ENCODE measurements at regions of chr20 and their contacts with region 1.

Region 1: DNA sequence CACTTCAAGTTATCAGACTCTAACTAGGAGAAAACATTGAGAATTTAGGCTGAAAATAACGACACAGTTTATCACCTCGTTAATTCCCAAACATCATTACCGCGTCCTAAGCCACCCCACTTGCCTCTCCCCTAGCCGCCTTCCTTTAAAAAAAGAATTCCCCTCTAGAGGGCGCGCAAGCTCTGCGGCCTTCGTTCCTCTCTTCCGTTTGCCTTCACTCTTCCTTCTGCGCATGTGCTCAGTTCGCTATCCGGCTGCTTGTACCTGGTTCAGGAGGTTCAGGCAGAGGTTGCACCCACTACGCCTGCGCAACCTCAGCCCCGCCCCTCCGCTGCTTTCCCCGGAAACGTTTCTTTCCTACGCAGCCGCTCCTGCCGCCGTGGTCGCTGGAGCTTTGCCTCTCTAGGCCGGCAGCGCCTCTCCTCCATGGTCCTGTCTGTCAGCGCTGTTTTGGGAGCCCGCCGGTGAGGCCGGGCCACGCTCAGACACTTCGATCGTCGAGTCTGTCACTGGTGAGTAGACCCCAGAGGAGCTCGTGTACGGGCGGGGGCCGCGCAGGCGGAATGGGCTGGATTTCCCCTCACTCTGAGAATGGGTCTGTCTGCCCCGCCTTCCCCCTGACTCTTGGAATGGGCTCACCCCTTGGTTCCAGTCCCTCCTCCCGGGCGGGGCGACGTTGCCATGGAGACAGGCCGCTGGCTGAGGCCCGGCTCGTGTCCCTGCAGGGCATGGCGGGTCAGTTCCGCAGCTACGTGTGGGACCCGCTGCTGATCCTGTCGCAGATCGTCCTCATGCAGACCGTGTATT is at the start of gene SYS1:
- DNase-seq: peak; percentile 97 to 99 (median 99)
- ATAC-seq: peak; percentile 86
- H3K4me3 ChIP-seq: peak within 1 kb of the TSS; percentile 91 to 99
- H3K4me3 Mint-ChIP-seq: peak within 1 kb of the TSS; percentile 100
- H3K27ac ChIP-seq: peak within 1 kb of the TSS; percentile 92 to 100
- H3K27ac Mint-ChIP-seq: peak within 1 kb of the TSS; percentile 100
- H3K4me1 ChIP-seq: peaks cover 33% of the 10 kb centered on the region
- H3K4me1 Mint-ChIP-seq: peaks cover 49% of the 10 kb centered on the region
- H3K27me3 ChIP-seq: no peaks in the 10 kb centered on the region
- H3K27me3 Mint-ChIP-seq: no peaks in the 10 kb centered on the region
- CTCF ChIP-seq: peak; percentile 89
- total RNA-seq, gene SYS1: 111 to 116 TPM

Region 2: DNA sequence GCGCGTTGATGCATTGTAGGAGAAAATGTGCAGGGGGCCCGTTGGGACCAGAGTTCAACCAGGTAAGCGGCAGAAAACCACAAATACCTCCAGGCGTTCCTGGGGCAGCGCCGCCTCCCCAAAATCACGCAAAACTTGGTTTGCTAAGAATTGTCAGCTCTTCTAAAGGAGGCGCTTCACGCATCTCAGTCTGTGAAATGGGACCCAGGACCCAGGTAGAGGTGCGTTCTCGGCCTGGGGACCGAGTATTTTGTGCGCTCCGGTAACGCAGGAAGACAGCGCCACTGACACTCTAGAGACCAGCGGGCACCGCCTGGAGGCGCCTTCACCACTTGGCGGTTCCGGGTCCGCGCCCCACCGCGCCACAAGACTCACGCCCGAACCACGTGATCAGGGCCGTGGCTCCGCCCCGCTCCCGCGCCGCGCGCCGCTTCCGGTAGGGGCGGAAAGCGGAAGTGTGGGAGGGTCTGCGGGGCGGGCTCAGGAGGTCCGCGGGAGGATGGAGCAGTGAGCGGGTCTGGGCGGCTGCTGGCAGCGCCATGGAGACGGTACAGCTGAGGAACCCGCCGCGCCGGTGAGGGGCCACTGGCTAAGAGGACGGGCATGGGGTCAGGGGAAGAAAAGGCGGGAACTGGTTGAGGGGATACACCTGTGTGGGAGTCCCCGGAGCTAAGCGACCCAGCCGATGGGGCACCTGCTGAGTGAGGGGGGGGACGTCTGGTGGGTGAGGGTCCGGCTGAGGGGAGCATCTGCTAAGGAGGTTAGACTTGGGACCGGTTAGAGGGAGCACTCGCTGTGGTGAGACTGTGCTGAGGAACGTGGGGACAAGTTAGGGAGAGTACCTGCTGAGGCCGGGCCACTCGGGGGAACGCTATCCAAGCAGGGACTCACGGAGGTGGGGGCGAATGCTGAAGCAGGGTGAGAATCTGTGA is 396.7 kb before region 1 on chr20 and contains the start of gene STK4:
- CTCF ChIA-PET with region 1: no interaction called
- POLR2A ChIA-PET with region 1: no interaction called
- intact Hi-C with region 1: loop called in 1 of 2 experiments (anchors 5 kb)
- DNase-seq: peak; percentile 90 to 99 (median 96)
- ATAC-seq: peak; percentile 76
- H3K4me3 ChIP-seq: peak within 1 kb of the TSS; percentile 96 to 97
- H3K4me3 Mint-ChIP-seq: peak within 1 kb of the TSS; percentile 91
- H3K27ac ChIP-seq: peak within 1 kb of the TSS; percentile 82 to 93
- H3K27ac Mint-ChIP-seq: peak within 1 kb of the TSS; percentile 89
- H3K4me1 ChIP-seq: peaks cover 28% of the 10 kb centered on the region
- H3K4me1 Mint-ChIP-seq: peaks cover 51% of the 10 kb centered on the region
- H3K27me3 ChIP-seq: no peaks in the 10 kb centered on the region
- H3K27me3 Mint-ChIP-seq: no peaks in the 10 kb centered on the region
- CTCF ChIP-seq: no peak
- total RNA-seq, gene STK4: 253 to 259 TPM

Region 3: GRCh38 chr20:45373353-45374100 is 10.5 kb after region 1 on chr20:
- CTCF ChIA-PET with region 1: interaction called, 85 read pairs
- POLR2A ChIA-PET with region 1: interaction called, 76 read pairs
- intact Hi-C with region 1: loop called (anchors 1 kb)
- DNase-seq: peak; percentile 81 to 94 (median 91)
- ATAC-seq: peak; percentile 89
- H3K4me3 ChIP-seq: peak overlapping the region; percentile 57 to 64
- H3K4me3 Mint-ChIP-seq: peak overlapping the region; percentile 89
- H3K27ac ChIP-seq: peak overlapping the region; percentile 51 to 85
- H3K27ac Mint-ChIP-seq: peak overlapping the region; percentile 91
- H3K4me1 ChIP-seq: peaks cover 14% of the 10 kb centered on the region
- H3K4me1 Mint-ChIP-seq: peaks cover 37% of the 10 kb centered on the region
- H3K27me3 ChIP-seq: no peaks in the 10 kb centered on the region
- H3K27me3 Mint-ChIP-seq: no peaks in the 10 kb centered on the region
- CTCF ChIP-seq: peak; percentile 90

Region 4: DNA sequence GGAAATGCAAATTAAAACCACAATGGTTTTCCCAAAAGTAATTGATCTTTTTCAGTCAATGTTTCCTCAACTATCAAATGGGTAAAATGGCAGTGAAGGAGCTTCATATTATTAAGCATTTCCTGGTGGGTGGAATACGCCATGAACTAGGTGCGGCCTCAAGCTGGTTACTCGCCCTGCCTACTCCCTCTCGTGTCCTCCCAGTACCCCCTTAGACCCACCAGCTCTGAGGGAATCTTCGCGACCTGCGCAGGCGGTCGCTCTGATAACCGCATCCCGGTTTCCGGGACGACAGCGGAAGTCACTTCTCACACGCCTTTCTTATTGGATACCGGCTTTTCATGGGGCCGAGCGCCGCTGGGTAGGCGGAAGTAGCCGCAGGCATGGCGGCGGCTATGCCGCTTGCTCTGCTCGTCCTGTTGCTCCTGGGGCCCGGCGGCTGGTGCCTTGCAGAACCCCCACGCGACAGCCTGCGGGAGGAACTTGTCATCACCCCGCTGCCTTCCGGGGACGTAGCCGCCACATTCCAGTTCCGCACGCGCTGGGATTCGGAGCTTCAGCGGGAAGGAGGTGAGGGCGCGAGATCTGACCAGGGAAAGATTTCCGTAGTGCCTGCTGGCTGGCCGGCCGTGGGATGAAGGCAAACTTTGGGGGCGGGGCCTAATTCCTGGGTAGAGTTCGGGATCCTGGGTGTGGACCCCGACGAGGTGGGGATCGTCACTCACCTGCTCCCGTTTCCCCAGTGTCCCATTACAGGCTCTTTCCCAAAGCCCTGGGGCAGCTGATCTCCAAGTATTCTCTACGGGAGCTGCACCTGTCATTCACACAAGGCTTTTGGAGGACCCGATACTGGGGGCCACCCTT is 53.0 kb after region 1 on chr20 and contains the start of gene PIGT:
- CTCF ChIA-PET with region 1: interaction called, 6 read pairs
- POLR2A ChIA-PET with region 1: interaction called, 30 read pairs
- intact Hi-C with region 1: loop called (anchors 1 kb)
- DNase-seq: peak; percentile 77 to 98 (median 89)
- ATAC-seq: peak; percentile 96
- H3K4me3 ChIP-seq: peak within 1 kb of the TSS; percentile 87 to 98
- H3K4me3 Mint-ChIP-seq: peak within 1 kb of the TSS; percentile 94
- H3K27ac ChIP-seq: peak within 1 kb of the TSS; percentile 70 to 90
- H3K27ac Mint-ChIP-seq: peak within 1 kb of the TSS; percentile 96
- H3K4me1 ChIP-seq: peaks cover 15% of the 10 kb centered on the region
- H3K4me1 Mint-ChIP-seq: peaks cover 40% of the 10 kb centered on the region
- H3K27me3 ChIP-seq: no peaks in the 10 kb centered on the region
- H3K27me3 Mint-ChIP-seq: no peaks in the 10 kb centered on the region
- CTCF ChIP-seq: no peak
- total RNA-seq, gene PIGT: 213 to 230 TPM

Region 5: DNA sequence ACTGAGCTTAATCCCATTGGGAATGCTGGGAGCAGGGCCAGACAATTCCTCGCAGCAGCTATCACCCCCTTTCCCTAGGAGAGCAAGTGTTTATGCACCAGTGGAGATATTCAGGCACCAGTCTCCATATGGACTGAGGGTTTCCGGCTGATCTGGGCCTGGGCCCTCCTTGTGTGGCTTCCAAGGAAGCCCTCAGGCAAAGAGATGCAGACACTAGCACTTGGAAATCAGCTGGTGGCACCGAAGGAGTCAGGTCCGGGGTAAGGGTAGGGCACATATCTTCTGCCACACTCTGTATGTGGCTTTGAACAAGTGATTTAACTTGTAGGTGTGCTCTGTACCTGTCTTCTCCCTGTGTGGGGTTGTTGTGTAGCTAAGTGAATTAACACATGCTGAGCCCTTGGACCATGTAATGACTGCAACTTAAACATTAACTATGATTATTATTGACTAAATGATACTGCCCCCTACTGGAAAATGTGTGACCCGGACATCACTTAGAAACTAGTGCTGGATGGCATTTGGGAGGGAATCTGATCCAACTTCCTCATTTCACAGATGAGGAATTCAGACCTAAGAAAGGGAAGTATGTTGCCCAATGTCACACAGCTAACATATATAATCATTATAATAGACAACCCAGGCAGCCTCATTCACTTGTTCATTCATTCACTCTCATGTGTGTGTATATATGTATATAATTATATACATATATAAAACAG is 87.3 kb after region 1 on chr20:
- CTCF ChIA-PET with region 1: interaction called, 21 read pairs
- POLR2A ChIA-PET with region 1: interaction called, 10 read pairs
- intact Hi-C with region 1: loop called (anchors 1 kb)
- DNase-seq: peak in 2 of 9 experiments; percentile 56 to 66
- ATAC-seq: peak; percentile 52
- H3K4me3 ChIP-seq: no peak overlapping the region
- H3K4me3 Mint-ChIP-seq: no peak overlapping the region
- H3K27ac ChIP-seq: no peak overlapping the region
- H3K27ac Mint-ChIP-seq: no peak overlapping the region
- H3K4me1 ChIP-seq: no peaks in the 10 kb centered on the region
- H3K4me1 Mint-ChIP-seq: peaks cover under 1% of the 10 kb centered on the region
- H3K27me3 ChIP-seq: no peaks in the 10 kb centered on the region
- H3K27me3 Mint-ChIP-seq: peaks cover 7% of the 10 kb centered on the region
- CTCF ChIP-seq: peak; percentile 64

Region 6: DNA sequence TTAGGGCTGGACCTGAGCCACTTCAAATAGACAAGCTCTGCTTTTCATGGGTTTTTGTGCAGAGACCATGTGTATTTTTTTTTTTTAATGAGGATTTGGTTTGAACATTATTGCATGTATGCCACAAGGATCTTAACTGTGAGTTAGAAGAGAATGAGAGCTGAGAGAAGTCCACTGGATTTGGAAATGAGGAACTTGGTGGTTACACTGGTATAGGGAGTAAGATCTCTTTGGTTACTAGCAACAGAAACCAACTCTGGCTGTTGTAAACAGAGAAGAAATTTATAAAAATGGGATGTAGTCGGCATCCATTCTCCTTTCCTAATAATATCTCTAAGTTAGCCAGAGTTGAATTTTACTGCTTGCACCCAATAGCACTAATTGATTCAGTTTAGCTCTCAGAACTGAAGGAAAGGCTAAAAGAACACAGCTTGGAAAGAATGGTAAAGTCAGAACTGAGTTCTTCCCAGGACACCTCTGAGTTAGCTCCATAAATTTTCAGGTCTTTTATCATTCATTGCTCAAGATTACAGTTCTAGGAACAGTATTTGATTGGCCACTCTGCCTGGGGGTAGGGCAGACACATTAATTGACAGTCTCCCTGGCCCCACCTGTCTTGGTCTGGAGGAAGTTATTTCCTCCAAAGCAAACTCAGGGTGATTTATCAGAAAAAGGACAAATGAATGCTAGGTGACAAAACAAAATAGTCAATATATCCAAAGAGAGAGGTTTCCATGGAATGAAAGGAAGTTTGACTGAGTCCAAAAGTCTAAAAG is 102.7 kb after region 1 on chr20:
- CTCF ChIA-PET with region 1: no interaction called
- POLR2A ChIA-PET with region 1: no interaction called
- intact Hi-C with region 1: no loop called
- DNase-seq: no peak
- ATAC-seq: no peak
- H3K4me3 ChIP-seq: no peak overlapping the region
- H3K4me3 Mint-ChIP-seq: no peak overlapping the region
- H3K27ac ChIP-seq: no peak overlapping the region
- H3K27ac Mint-ChIP-seq: no peak overlapping the region
- H3K4me1 ChIP-seq: peaks cover 8% of the 10 kb centered on the region
- H3K4me1 Mint-ChIP-seq: peaks cover 8% of the 10 kb centered on the region
- H3K27me3 ChIP-seq: peaks cover 12 to 17% of the 10 kb centered on the region in 2 experiments
- H3K27me3 Mint-ChIP-seq: peaks cover 28% of the 10 kb centered on the region
- CTCF ChIP-seq: no peak

Region 7: DNA sequence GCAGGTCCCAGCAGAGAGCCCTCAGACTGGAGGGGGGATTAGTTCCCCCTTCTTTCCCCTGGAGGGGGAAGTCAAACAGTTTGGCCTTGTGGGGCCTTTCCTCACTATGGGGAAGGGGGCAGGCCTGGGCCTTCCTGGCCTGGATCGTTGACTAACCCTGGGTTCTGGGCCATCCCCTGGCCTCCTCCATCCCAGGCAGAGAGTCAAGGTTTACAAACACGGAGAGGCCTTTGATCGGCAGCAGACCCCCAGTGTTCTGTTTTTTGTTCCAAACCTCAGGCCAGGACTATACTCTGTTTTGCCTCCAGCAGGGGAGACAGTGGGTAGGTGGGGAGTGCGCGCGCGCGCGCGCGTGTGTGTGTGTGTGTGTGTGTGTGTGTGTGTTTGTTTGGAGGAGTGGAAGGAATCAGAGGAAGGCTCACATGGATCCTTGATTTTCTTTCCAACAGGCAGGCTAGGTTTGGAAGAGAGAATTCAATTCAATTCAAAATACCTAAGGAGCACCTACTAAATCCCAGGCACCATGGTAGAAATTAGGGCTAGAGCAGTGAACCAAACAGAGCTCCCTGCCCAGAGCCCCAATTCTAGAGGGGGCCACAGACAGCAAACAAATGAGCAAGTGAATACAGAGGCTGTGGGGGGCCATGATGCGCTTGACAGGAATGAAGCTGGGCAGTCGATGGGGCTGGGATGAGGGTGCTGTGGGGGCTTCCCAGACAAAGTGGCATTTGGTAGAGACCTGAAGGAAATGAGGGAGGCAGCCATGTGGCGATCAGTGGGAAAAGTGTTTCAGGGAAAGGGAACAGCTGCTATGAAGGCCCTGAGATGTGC is 1311.5 kb after region 1 on chr20:
- CTCF ChIA-PET with region 1: no interaction called
- POLR2A ChIA-PET with region 1: no interaction called
- intact Hi-C with region 1: no loop called
- DNase-seq: no peak
- ATAC-seq: no peak
- H3K4me3 ChIP-seq: no peak overlapping the region
- H3K4me3 Mint-ChIP-seq: no peak overlapping the region
- H3K27ac ChIP-seq: no peak overlapping the region
- H3K27ac Mint-ChIP-seq: no peak overlapping the region
- H3K4me1 ChIP-seq: no peaks in the 10 kb centered on the region
- H3K4me1 Mint-ChIP-seq: no peaks in the 10 kb centered on the region
- H3K27me3 ChIP-seq: no peaks in the 10 kb centered on the region
- H3K27me3 Mint-ChIP-seq: no peaks in the 10 kb centered on the region
- CTCF ChIP-seq: no peak

Measured in CD8-positive, alpha-beta T cell (primary cell).